Cardiac septum (tissue), 1 donor: ENCODE measurements at regions of chr18 and their contacts with region 1.

Region 1: DNA sequence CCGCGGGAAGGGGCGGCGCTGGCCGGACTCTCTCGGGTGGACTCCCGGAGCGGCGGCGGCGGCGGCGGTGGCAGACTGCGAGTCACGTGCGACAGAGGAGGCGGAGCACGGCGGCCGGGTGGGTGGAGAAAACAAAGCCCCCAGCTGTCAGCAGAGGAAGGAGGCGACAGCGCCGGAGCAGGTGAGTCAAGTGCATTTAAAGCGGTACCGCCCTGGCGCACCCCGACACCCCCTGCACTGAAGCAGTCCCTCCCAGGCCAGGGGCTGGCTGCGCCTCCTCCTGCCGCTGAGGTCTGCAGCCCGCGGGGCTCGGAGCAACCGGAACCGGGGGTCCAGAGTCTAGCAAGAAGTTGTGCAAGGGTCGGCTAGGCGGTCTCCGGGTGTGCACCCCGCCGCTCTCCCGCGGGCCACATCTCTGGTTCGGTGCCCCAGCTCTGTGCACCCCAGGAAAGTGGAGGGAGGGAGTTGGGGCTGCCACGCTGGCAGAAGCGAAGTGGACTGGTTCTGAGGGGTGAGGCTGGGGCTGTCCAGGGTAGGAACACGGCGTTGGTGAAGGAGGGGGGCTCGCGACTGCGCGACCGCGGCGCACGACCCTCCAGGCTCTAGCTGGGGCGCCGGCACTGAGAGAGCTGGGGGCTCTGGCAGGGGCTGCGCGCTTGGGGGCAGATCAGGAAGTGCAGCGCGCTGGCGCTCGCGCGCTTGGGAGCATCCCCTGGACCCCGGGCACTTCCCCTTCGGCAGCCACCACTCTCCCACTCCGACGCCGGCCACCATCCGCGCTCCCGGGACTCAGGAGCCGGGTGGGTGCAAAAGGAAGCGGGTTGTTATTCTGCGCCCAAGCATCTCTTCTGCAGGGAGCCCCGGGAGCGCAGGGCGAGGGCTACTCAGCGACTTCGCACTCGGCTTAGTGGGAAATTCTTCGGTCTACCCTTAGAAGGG is 64.0 kb upstream of the MAPRE2 start:
- DNase-seq: peak; percentile 92

Region 2: GRCh38 chr18:34880882-34881834 is 96.0 kb before region 1 on chr18:
- intact Hi-C with region 1: loop called (anchors 5 kb)
- DNase-seq: no peak

Region 3: DNA sequence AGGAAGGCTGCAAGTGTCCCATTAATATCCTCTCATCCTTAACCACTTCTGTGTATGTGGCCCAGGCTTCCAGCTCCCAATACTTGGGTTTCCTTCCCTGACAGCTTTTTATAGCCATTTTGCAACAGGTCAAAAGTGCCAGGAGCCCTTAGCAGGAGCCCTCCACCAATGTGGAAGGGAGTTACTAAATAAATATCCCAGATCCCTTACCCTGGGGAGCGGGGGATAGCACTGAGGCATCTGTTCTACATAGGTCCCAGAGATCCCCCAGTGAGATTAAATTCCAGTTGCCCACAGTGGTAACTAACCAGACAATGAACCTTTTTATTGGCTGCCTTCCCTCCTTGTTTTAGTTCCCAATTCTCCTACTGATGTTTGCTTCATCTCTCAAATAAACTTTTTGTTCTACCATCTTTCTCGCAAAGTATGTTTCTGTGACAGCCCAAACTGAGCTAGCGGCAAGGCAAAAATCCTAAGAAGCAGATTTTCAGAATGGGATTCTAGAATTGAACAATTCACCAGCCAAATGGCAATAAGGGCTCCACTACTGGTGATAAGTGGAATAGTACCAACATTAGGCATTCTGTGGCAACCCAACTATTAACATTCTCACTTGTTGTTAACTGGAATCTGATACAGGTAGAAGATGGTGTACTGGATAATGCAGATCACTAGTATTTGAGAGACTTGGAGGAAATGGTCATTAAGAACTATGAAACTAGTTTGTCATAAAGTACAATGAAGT is 19.9 kb before region 1 on chr18:
- intact Hi-C with region 1: loop called (anchors 2 kb)
- DNase-seq: no peak